CD4-positive, alpha-beta T cell (primary cell): ENCODE measurements at regions of chr15 and their contacts with region 1.

Region 1: DNA sequence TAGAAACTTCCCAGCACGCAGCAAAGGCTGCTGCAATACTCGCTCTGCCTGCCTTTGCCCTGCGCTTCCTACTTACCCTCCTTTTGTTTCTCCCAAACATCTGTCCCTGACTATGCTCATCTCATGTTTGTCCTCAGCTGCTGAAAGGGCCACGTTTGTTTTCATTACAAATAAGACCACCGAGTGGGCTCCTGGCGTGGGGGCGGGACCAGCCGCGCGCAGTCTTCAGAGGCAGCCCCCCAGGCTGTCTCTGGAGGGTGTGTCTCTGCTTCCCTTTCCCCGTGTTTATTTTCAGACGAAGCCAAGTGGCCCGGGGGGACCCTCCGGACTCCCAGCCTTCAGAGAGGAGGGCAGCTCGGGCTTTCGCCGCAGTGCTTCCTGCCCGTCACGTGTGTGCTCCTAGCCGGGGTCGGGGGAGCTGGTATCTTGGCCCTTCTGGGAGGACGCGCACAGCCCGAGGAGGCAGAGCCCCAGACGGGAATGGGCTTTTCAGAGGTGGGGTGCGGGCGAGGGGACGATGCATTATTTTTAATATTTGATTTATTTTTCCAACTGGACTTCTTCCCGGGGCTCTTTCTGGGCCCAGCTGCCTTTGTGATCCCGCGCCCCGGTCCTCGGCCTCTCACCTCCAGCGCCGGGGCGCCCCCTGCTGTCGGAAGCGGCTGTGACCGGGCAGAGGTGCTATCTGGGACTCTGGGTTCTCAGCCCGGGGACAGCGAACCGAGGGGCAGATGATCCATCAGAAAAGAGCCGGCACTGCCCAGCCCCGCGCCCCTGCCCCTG is 70.0 kb upstream of the CGNL1 start:
- DNase-seq: peak; percentile 64 to 88 (median 80)
- ATAC-seq: peak; percentile 81
- H3K4me3 ChIP-seq: peak overlapping the region; percentile 54
- H3K4me3 Mint-ChIP-seq: peak overlapping the region; percentile 51
- H3K27ac ChIP-seq: no peak overlapping the region
- H3K27ac Mint-ChIP-seq: no peak overlapping the region
- H3K4me1 ChIP-seq: peaks cover 11% of the 10 kb centered on the region
- H3K4me1 Mint-ChIP-seq: no peaks in the 10 kb centered on the region
- H3K27me3 ChIP-seq: no peaks in the 10 kb centered on the region
- H3K27me3 Mint-ChIP-seq: no peaks in the 10 kb centered on the region
- CTCF ChIP-seq: peak; percentile 84

Region 2: DNA sequence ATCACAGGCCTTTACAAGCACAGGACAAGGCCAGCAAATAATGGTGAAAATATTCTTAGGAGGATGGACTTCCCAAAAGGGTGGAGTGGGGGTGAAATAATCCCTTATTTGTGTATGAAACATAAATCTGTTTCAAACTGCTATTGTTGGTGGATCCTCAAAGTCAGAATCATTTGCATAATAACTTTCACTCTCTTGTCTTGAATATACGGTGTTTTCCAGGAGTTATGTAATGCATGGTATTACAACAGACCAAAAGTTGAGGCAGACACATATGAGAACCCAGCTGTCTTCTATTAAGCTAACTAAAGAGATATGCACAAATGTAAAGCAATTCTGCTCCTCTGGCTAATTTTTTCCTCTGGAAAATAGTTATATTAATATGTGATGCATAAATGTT is 1621.1 kb before region 1 on chr15:
- CTCF ChIA-PET with region 1: no interaction called
- POLR2A ChIA-PET with region 1: no interaction called
- intact Hi-C with region 1: no loop called
- DNase-seq: peak in 2 of 14 experiments; percentile 31 to 33
- ATAC-seq: no peak
- H3K4me3 ChIP-seq: no peak overlapping the region
- H3K4me3 Mint-ChIP-seq: no peak overlapping the region
- H3K27ac ChIP-seq: no peak overlapping the region
- H3K27ac Mint-ChIP-seq: no peak overlapping the region
- H3K4me1 ChIP-seq: no peaks in the 10 kb centered on the region
- H3K4me1 Mint-ChIP-seq: peaks cover 5% of the 10 kb centered on the region
- H3K27me3 ChIP-seq: no peaks in the 10 kb centered on the region
- H3K27me3 Mint-ChIP-seq: no peaks in the 10 kb centered on the region
- CTCF ChIP-seq: no peak

Region 3: DNA sequence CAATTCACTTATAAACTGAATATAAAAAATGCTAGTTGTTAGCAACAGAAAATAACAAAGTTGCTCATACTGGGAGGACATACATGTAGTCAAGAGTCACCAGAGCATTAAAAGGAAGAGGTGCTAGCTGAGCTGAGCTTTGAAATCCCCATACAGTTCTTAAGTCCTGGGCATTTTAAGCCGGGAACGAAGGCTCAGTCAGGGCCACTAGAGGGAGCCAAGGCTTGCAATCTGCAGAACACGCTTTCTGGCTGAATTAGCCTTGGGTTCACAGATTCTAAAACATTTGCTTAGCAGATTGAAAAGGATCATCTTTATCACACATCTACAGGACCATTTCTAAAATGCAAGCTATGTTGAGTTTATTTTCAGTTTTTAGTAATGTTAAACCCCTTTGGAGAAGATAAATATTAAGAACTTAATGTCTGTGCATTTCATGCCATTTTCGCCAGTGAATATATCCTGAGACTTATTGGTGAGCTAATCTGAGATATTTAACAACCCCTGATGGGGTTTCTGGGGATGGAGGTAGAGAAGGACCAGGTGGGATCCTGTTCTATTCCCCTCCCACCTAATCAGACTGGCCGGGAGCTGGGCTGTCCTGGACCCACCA is 815.1 kb before region 1 on chr15:
- CTCF ChIA-PET with region 1: interaction called, 13 read pairs
- POLR2A ChIA-PET with region 1: interaction called, 3 read pairs
- intact Hi-C with region 1: loop called (anchors 1 kb)
- DNase-seq: peak; percentile 10 to 71 (median 29)
- ATAC-seq: peak; percentile 48
- H3K4me3 ChIP-seq: no peak overlapping the region
- H3K4me3 Mint-ChIP-seq: no peak overlapping the region
- H3K27ac ChIP-seq: no peak overlapping the region
- H3K27ac Mint-ChIP-seq: no peak overlapping the region
- H3K4me1 ChIP-seq: no peaks in the 10 kb centered on the region
- H3K4me1 Mint-ChIP-seq: no peaks in the 10 kb centered on the region
- H3K27me3 ChIP-seq: peaks cover 0 to 3% of the 10 kb centered on the region in 2 experiments
- H3K27me3 Mint-ChIP-seq: no peaks in the 10 kb centered on the region
- CTCF ChIP-seq: peak; percentile 69

Region 4: DNA sequence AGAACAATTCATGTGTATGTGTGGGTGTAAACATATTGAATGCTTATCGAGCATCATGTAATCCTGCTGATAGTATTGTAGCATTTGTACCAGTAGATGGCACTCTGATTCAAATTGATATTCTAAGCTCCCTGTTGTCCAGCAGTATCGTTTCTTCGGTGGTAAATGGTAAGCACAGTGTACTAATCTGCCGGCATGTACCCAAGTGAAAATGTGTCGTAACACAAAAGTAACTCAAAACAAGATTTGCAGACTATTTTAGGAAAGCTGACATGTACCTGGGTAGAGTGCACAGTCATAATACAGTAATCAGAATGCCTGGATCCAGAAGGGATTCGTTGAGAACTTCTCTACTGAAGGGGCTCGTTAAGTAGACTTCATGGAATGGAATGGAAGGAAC is 809.7 kb before region 1 on chr15:
- CTCF ChIA-PET with region 1: interaction called, 13 read pairs
- POLR2A ChIA-PET with region 1: no interaction called
- intact Hi-C with region 1: loop called (anchors 1 kb)
- DNase-seq: peak in 3 of 14 experiments; percentile 44 to 65 (median 58)
- ATAC-seq: peak; percentile 49
- H3K4me3 ChIP-seq: no peak overlapping the region
- H3K4me3 Mint-ChIP-seq: no peak overlapping the region
- H3K27ac ChIP-seq: no peak overlapping the region
- H3K27ac Mint-ChIP-seq: no peak overlapping the region
- H3K4me1 ChIP-seq: no peaks in the 10 kb centered on the region
- H3K4me1 Mint-ChIP-seq: peaks cover 4% of the 10 kb centered on the region
- H3K27me3 ChIP-seq: peaks cover 0 to 4% of the 10 kb centered on the region in 2 experiments
- H3K27me3 Mint-ChIP-seq: peaks cover 15% of the 10 kb centered on the region
- CTCF ChIP-seq: peak; percentile 72

Region 5: DNA sequence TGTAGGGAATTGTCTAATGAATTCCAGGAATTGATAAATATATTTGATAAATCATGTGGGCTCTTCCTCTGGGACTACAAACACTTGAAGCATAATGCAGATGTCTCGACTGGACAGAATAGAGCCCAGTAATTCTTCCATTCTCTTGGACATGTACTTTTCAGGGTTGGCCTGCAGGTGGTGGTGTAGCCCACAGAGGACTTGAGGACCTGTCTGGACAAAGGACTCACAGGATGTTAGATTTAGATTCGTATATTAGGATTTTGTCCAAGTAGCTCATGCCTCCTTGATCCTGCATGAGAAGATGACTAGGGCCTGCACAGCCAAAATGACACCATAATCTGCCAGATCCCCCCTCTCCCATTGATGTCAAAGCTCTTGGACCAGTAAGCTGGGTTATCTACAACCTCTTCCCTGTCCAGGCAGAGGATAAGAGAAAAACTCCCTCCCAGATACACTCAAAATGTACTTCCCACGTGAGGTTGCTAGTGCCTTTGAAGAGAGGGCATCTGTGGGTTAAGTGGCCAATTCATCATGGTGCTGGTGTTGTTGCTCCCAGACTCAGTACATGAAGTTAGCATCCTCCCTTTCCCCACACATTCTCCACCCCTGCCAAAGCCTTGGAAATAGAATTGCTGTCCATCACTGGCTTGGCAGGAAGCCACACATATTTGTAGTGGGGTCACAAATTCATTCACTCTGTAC is 484.5 kb before region 1 on chr15:
- CTCF ChIA-PET with region 1: interaction called, 5 read pairs
- POLR2A ChIA-PET with region 1: no interaction called
- intact Hi-C with region 1: loop called (anchors 1 to 2 kb)
- DNase-seq: peak; percentile 15 to 68 (median 38)
- ATAC-seq: no peak
- H3K4me3 ChIP-seq: no peak overlapping the region
- H3K4me3 Mint-ChIP-seq: no peak overlapping the region
- H3K27ac ChIP-seq: no peak overlapping the region
- H3K27ac Mint-ChIP-seq: no peak overlapping the region
- H3K4me1 ChIP-seq: no peaks in the 10 kb centered on the region
- H3K4me1 Mint-ChIP-seq: no peaks in the 10 kb centered on the region
- H3K27me3 ChIP-seq: no peaks in the 10 kb centered on the region
- H3K27me3 Mint-ChIP-seq: no peaks in the 10 kb centered on the region
- CTCF ChIP-seq: peak; percentile 47

Region 6: DNA sequence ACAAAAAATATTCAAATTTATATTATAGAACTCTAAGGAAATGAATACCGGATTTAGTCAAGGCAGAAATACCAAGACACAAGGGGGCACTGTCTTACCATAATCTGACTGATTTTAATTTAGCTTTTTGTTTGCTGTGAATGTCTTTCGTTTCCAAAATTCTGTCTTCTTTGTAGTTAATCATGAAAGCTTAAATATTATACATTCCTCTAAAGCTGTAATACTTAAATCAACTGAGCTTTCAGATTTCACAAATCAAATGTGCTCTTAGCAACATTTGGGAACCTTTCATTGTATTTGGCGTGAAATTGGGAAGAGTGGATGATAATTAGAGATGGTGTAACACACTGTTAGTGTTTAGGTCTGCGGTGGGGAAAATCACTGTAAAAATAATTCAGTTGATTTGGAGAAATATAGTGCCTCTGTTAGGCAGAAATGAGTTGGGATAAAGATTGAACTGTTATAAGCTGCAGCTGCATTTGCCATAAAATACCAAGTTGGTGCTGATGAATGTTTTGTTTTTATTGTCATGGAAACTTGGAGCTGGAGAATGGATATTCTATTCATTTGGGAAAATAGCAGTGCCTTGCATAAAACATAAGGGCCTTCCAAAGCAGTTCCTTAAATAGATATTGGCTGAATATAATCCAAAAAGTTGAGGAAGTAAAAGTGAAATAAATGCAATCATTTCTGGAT is 159.7 kb before region 1 on chr15:
- CTCF ChIA-PET with region 1: interaction called, 8 read pairs
- POLR2A ChIA-PET with region 1: no interaction called
- intact Hi-C with region 1: loop called (anchors 2 kb)
- DNase-seq: peak in 4 of 14 experiments; percentile 15 to 52 (median 38)
- ATAC-seq: no peak
- H3K4me3 ChIP-seq: no peak overlapping the region
- H3K4me3 Mint-ChIP-seq: no peak overlapping the region
- H3K27ac ChIP-seq: no peak overlapping the region
- H3K27ac Mint-ChIP-seq: no peak overlapping the region
- H3K4me1 ChIP-seq: no peaks in the 10 kb centered on the region
- H3K4me1 Mint-ChIP-seq: peaks cover 9% of the 10 kb centered on the region
- H3K27me3 ChIP-seq: no peaks in the 10 kb centered on the region
- H3K27me3 Mint-ChIP-seq: no peaks in the 10 kb centered on the region
- CTCF ChIP-seq: peak; percentile 62

Region 7: DNA sequence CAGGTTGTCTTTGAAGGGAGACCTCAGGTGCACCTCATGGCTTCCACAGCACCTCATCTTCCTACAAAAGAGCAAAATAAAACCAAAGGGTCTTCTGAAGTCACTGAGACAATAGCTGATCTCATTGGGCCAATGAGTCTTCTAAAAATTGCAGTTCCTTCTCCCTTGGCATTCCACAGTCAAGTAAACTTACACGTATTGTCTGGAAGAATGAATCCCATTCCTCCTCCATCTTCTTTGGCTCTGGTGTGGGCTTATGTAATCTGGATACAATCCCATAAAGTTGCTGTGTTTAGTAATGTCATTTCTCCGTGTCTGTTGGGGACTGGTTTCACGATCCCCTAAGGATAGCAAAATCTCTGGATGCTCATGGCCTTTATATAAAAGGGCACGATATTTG is 15.5 kb before region 1 on chr15:
- CTCF ChIA-PET with region 1: no interaction called
- POLR2A ChIA-PET with region 1: no interaction called
- intact Hi-C with region 1: no loop called
- DNase-seq: no peak
- ATAC-seq: no peak
- H3K4me3 ChIP-seq: no peak overlapping the region
- H3K4me3 Mint-ChIP-seq: no peak overlapping the region
- H3K27ac ChIP-seq: no peak overlapping the region
- H3K27ac Mint-ChIP-seq: no peak overlapping the region
- H3K4me1 ChIP-seq: no peaks in the 10 kb centered on the region
- H3K4me1 Mint-ChIP-seq: no peaks in the 10 kb centered on the region
- H3K27me3 ChIP-seq: no peaks in the 10 kb centered on the region
- H3K27me3 Mint-ChIP-seq: no peaks in the 10 kb centered on the region
- CTCF ChIP-seq: no peak

Region 8: DNA sequence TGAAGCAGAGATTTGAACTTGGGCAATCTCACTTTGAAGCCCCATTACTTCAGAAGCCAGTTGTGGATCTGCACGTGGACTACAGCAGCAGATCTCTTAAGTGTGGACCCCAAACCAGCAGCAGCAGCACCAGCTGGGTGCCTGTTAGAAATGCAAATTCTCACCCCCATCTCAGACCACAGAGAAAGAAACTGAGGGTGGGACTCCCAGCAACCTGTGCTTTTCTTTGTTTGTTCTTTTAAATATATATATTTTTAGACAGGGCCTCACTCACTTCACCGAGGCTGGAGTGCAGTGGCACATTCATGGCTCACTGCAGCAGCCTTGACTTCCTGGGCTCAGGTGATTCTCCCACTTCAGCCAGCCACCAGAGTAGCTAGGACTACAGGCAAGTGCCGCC is 1574.0 kb after region 1 on chr15:
- CTCF ChIA-PET with region 1: no interaction called
- POLR2A ChIA-PET with region 1: no interaction called
- intact Hi-C with region 1: no loop called
- DNase-seq: no peak
- ATAC-seq: no peak
- H3K4me3 ChIP-seq: no peak overlapping the region
- H3K4me3 Mint-ChIP-seq: no peak overlapping the region
- H3K27ac ChIP-seq: no peak overlapping the region
- H3K27ac Mint-ChIP-seq: no peak overlapping the region
- H3K4me1 ChIP-seq: no peaks in the 10 kb centered on the region
- H3K4me1 Mint-ChIP-seq: no peaks in the 10 kb centered on the region
- H3K27me3 ChIP-seq: no peaks in the 10 kb centered on the region
- H3K27me3 Mint-ChIP-seq: no peaks in the 10 kb centered on the region
- CTCF ChIP-seq: no peak